Heart left ventricle (tissue), 16 donors: ENCODE measurements at regions of chr5 and their contacts with region 1.

Region 1: DNA sequence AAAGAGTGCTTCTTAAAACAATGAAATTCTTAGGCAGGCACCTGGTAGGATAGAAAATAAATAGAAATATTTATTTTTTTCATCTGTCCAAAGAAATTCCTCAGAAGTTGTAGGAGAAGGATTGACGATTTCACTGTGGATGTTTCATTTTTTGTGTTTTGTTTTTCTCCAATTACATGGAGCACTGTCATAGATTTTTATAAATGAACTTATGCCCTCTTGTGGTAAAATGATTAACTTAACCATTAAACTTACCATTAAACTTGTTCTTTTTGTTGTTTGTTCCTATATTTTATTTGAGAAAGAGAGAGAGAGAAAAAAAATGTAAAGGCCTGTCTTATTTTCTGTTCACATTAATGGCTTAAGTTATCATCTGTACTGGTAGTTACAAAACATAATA is 339.2 kb downstream of the PRR16 start:
- DNase-seq: no peak
- ATAC-seq: no peak
- H3K4me3 ChIP-seq: no peak overlapping the region
- H3K27ac ChIP-seq: no peak overlapping the region
- H3K4me1 ChIP-seq: peaks cover 0 to 6% (median 0%) of the 10 kb centered on the region in 12 donors
- H3K27me3 ChIP-seq: no peaks in the 10 kb centered on the region
- CTCF ChIP-seq: peak in 9 of 12 donors; percentile 8 to 51 (median 40)
- POLR2A ChIP-seq: no peak

Region 2: DNA sequence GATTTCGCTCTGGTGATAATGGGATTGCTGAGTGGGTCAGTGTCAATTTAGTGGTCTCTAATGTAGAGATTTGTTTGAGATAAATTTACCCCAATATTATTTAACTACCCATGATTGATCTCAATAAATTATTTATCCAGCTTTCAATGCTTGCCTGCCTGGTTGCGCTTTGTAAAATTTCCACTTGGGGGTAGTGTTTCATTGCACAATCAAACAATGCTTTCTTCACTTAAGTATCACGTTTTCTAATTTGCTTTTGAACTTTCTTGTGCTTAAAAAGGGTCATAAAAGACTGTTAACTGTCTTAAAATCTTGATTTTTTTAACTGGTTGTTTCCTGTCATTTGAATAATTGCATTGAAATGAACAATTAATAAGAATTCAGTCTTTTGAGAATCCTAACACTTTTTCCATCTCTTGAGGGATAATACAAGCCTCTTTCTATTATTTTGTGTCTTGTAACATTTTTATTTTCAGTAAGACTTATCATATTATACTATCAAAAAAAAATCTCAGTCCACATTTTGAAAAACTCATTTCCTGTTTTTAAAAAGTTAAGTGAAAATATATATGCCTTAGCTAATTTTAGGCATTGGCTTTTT is 1332.3 kb before region 1 on chr5:
- intact Hi-C with region 1: loop called in 2 of 10 experiments (anchors 10 kb)
- DNase-seq: no peak
- ATAC-seq: no peak
- H3K4me3 ChIP-seq: no peak overlapping the region
- H3K27ac ChIP-seq: no peak overlapping the region
- H3K4me1 ChIP-seq: peaks cover 0 to 13% (median 0%) of the 10 kb centered on the region in 12 donors
- H3K27me3 ChIP-seq: no peaks in the 10 kb centered on the region
- CTCF ChIP-seq: peak; percentile 21 to 66 (median 46)
- POLR2A ChIP-seq: no peak

Region 3: DNA sequence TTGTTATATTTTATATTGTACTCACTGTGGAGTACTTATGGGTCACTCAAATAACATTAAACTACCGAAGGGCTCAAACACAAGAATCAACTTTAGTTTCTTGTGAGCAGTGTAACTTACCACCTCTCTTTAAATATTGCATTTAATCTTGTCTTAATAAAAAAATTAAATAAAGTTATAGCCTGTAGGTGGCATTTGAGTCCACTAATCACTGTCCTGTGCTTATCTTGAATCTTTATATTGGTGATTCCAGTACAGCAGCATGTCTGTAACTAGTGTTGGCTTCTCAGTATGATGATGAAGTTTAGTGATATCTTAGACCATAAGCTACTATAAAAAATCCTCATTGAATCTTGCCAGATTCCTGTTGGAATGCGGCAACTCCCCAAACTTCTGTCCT is 860.1 kb before region 1 on chr5:
- intact Hi-C with region 1: loop called (anchors 2 to 10 kb)
- DNase-seq: no peak
- ATAC-seq: peak in 2 of 4 donors; percentile 34 to 68
- H3K4me3 ChIP-seq: no peak overlapping the region
- H3K27ac ChIP-seq: no peak overlapping the region
- H3K4me1 ChIP-seq: no peaks in the 10 kb centered on the region
- H3K27me3 ChIP-seq: no peaks in the 10 kb centered on the region
- CTCF ChIP-seq: peak in 10 of 12 donors; percentile 20 to 55 (median 36)
- POLR2A ChIP-seq: no peak

Region 4: DNA sequence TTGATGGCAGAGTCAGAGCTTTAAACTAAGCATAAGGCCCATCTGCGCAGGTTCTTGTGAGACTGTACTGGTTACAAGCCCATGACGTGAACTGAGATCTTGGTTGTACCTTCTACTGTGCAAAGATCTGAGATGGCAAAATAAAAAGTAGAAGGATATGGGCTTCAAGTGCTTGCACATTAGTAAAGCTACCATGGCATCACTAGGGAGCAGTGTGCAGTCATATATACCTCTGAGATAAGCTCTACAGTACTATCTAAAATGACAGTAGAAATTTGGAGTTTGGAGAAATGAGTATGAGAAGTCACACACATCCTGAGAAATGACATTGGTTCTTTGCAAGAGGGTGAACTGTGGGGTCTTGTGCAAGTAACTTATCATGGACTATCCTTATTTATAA is 747.4 kb before region 1 on chr5:
- intact Hi-C with region 1: loop called in 2 of 10 experiments (anchors 10 kb)
- DNase-seq: no peak
- ATAC-seq: peak; percentile 37 to 82 (median 67)
- H3K4me3 ChIP-seq: no peak overlapping the region
- H3K27ac ChIP-seq: peak overlapping the region in 7 of 12 donors; percentile 1 to 75 (median 40)
- H3K4me1 ChIP-seq: peaks cover 0 to 36% (median 9%) of the 10 kb centered on the region in 12 donors
- H3K27me3 ChIP-seq: no peaks in the 10 kb centered on the region
- CTCF ChIP-seq: peak in 8 of 12 donors; percentile 7 to 51 (median 38)
- POLR2A ChIP-seq: no peak

Region 5: GRCh38 chr5:120479066-120479465 is 324.2 kb before region 1 on chr5:
- intact Hi-C with region 1: loop called in 1 of 10 experiments (anchors 10 kb)
- DNase-seq: no peak
- ATAC-seq: peak in 2 of 4 donors; percentile 20 to 38
- H3K4me3 ChIP-seq: no peak overlapping the region
- H3K27ac ChIP-seq: no peak overlapping the region
- H3K4me1 ChIP-seq: peaks cover 0 to 23% (median 3%) of the 10 kb centered on the region in 12 donors
- H3K27me3 ChIP-seq: no peaks in the 10 kb centered on the region
- CTCF ChIP-seq: no peak
- POLR2A ChIP-seq: no peak

Region 6: DNA sequence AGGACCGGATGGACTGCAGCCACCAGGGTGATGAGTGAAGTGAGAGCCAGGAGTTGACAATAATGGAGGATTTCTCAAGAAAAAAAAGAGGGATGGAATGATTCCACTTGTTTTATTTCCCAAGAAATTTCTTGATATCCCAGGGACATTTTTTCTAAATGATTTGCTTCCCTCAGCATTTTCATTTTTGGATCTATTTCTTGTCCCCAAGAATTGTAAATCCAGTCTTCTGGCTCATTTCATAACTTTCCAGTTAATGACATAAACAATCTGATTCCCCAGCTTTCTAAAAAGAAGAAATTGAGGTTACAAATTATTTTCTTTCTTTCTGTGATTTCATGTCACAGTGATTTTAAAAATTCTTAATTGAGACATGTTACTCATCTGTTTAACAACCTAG is 107.3 kb after region 1 on chr5:
- intact Hi-C with region 1: no loop called
- DNase-seq: no peak
- ATAC-seq: no peak
- H3K4me3 ChIP-seq: no peak overlapping the region
- H3K27ac ChIP-seq: no peak overlapping the region
- H3K4me1 ChIP-seq: no peaks in the 10 kb centered on the region
- H3K27me3 ChIP-seq: no peaks in the 10 kb centered on the region
- CTCF ChIP-seq: no peak
- POLR2A ChIP-seq: no peak

Region 7: GRCh38 chr5:121239951-121240350 is 436.7 kb after region 1 on chr5:
- intact Hi-C with region 1: no loop called
- DNase-seq: no peak
- ATAC-seq: no peak
- H3K4me3 ChIP-seq: no peak overlapping the region
- H3K27ac ChIP-seq: no peak overlapping the region
- H3K4me1 ChIP-seq: no peaks in the 10 kb centered on the region
- H3K27me3 ChIP-seq: no peaks in the 10 kb centered on the region
- CTCF ChIP-seq: no peak
- POLR2A ChIP-seq: no peak